ENCODE measurements at regions of chr6 and their contacts with region 1.

Region 1: GRCh38 chr6:134640975-134641429 is 308.9 kb downstream of the ALDH8A1 start:
- DNase-seq: peak; percentile 86
- ATAC-seq: peak; percentile 92
- H3K4me3 ChIP-seq: no peak overlapping the region
- H3K4me3 Mint-ChIP-seq: no peak overlapping the region
- H3K27ac ChIP-seq: no peak overlapping the region
- H3K27ac Mint-ChIP-seq: no peak overlapping the region
- H3K4me1 ChIP-seq: peaks cover 7 to 8% of the 10 kb centered on the region in 2 donors
- H3K4me1 Mint-ChIP-seq: peaks cover 10% of the 10 kb centered on the region
- H3K27me3 ChIP-seq: no peaks in the 10 kb centered on the region
- H3K27me3 Mint-ChIP-seq: no peaks in the 10 kb centered on the region
- CTCF ChIP-seq: peak; percentile 96

Region 2: GRCh38 chr6:134166511-134167261 is 474.3 kb before region 1 on chr6:
- CTCF ChIA-PET with region 1: interaction called, 35 read pairs
- POLR2A ChIA-PET with region 1: no interaction called
- intact Hi-C with region 1: no loop called
- DNase-seq: no peak
- ATAC-seq: no peak
- H3K4me3 ChIP-seq: no peak overlapping the region
- H3K4me3 Mint-ChIP-seq: no peak overlapping the region
- H3K27ac ChIP-seq: no peak overlapping the region
- H3K27ac Mint-ChIP-seq: no peak overlapping the region
- H3K4me1 ChIP-seq: no peaks in the 10 kb centered on the region
- H3K4me1 Mint-ChIP-seq: peaks cover 5% of the 10 kb centered on the region
- H3K27me3 ChIP-seq: no peaks in the 10 kb centered on the region
- H3K27me3 Mint-ChIP-seq: no peaks in the 10 kb centered on the region
- CTCF ChIP-seq: no peak

Region 3: DNA sequence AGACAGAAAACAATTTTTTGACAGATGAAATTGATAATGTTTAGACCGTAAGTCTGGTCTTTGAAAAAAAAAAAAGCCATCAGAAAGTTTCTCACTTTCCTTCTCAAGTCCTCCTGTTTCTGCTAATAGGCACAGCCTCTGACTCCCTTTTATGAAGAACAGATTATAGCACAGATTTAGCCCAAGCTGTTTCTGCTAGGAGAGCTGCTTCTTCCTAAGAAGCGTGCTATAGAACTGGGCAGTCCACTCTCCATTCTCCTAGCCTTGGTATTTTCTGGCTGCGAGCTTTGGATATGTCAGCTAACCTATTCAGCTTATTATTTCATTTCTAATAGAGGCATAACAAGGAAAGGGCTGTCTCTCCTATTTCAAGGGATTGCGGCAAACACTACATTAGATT is 435.6 kb before region 1 on chr6:
- CTCF ChIA-PET with region 1: interaction called, 4 read pairs
- POLR2A ChIA-PET with region 1: interaction called, 10 read pairs
- intact Hi-C with region 1: no loop called
- DNase-seq: no peak
- ATAC-seq: no peak
- H3K4me3 ChIP-seq: no peak overlapping the region
- H3K4me3 Mint-ChIP-seq: no peak overlapping the region
- H3K27ac ChIP-seq: no peak overlapping the region
- H3K27ac Mint-ChIP-seq: no peak overlapping the region
- H3K4me1 ChIP-seq: peaks cover 0 to 3% of the 10 kb centered on the region in 2 donors
- H3K4me1 Mint-ChIP-seq: peaks cover 7% of the 10 kb centered on the region
- H3K27me3 ChIP-seq: no peaks in the 10 kb centered on the region
- H3K27me3 Mint-ChIP-seq: no peaks in the 10 kb centered on the region
- CTCF ChIP-seq: no peak

Region 4: DNA sequence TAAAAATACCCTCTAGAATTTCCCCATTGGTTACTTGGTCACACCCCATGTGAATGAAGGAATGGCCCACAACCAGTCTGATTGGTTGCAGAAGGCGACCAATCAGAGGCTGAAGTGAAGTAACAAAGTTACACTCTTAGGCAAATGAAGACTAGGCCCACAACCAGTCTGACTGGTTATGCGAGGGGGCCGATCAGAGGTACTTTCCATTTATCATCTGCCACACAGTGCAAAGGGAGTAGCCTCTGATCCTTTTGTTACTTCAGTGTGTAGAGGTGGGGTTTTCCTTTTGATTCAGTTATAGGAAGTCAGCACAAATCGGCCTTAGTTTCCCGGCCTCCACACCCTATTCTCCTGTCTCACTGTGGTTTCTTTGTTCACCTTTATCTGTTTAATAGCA is 261.9 kb before region 1 on chr6:
- CTCF ChIA-PET with region 1: interaction called, 5 read pairs
- POLR2A ChIA-PET with region 1: no interaction called
- intact Hi-C with region 1: loop called (anchors 5 kb)
- DNase-seq: peak; percentile 49
- ATAC-seq: peak; percentile 76
- H3K4me3 ChIP-seq: no peak overlapping the region
- H3K4me3 Mint-ChIP-seq: peak overlapping the region; percentile 9
- H3K27ac ChIP-seq: peak overlapping the region in 1 of 2 donors; percentile 61
- H3K27ac Mint-ChIP-seq: peak overlapping the region; percentile 16
- H3K4me1 ChIP-seq: no peaks in the 10 kb centered on the region
- H3K4me1 Mint-ChIP-seq: peaks cover 20% of the 10 kb centered on the region
- H3K27me3 ChIP-seq: no peaks in the 10 kb centered on the region
- H3K27me3 Mint-ChIP-seq: no peaks in the 10 kb centered on the region
- CTCF ChIP-seq: no peak

Region 5: DNA sequence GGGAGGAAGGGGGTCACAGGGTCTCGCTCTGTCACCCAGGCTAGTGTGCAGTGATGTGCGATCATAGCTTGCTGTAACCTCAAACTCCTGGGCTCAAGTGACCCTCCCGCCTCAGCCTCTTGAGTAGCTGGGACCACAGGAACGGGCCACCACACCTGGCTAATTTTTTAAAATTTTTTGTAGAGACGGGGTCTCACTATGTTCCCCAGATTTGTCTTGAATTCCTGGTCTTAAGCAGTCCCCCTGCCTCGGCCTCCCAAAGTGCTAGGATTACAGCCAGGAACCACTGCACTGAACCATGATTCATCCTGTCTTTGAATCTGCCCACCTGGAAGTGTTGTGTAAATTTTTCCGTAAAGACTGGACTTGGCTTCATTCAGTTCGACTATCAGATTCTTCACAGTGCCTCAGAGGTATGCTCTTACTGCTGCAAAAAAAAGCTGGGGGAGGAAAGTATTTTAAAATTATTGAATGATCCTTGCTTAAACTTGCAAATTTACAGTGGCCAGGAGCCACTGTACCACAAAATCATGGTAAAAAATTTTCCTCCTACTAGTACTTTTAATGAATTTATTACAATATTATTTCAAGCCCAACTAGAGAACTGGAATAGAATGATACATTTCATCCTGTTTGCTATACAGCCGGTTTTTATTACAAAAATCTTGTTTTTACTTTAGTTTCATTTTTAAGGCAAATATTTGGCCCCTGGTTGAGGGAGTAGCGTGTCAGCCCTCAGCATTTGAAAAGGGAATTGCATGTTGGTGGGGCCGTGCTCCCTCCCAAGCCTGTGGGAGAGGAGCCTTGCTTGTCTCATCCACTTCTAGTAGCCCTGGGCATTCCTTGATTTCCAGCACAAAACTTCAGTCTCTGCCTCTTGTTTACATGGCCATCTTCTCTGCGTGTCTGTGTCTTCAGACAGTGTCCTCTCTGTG is 120.6 kb before region 1 on chr6:
- CTCF ChIA-PET with region 1: no interaction called
- POLR2A ChIA-PET with region 1: no interaction called
- intact Hi-C with region 1: loop called (anchors 5 kb)
- DNase-seq: no peak
- ATAC-seq: no peak
- H3K4me3 ChIP-seq: no peak overlapping the region
- H3K4me3 Mint-ChIP-seq: no peak overlapping the region
- H3K27ac ChIP-seq: no peak overlapping the region
- H3K27ac Mint-ChIP-seq: no peak overlapping the region
- H3K4me1 ChIP-seq: peaks cover 8 to 15% of the 10 kb centered on the region in 2 donors
- H3K4me1 Mint-ChIP-seq: peaks cover 12% of the 10 kb centered on the region
- H3K27me3 ChIP-seq: no peaks in the 10 kb centered on the region
- H3K27me3 Mint-ChIP-seq: no peaks in the 10 kb centered on the region
- CTCF ChIP-seq: no peak

Region 6: DNA sequence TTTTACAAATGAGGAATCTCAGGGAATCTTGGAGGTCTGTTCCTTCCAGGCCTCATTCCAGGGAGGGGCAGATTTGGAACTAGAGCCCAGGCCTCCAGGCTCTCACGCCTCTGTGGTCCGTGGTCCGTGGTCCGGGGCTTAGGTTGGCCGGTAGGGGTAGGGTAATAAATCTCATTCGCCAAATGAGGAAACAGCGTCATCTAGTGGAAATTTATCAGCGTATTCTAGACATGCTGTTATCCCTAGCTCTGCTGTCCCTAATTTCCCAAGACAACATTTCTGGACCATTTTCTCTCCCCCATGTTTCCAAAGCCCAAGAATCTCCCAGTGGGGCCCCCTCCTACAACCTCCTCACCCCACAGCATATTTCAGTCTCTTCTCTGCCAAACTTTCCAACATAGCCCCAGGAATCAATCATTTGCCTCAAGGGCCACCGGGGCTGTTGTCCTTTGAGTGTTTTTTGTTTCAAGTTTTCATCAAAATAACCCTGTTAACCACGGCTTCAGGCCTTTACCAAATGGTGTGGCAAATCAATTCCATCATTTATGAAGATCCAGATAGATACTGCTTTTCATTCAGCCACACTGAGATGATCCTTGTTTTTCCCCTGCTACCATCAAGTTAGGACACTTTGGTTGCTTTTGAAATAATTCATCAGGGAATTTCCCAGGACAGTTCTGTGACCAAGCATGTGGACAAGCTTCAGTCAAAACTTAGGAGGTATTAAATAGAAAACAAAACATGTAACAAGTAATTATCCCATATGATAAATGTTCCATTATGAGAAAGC is 182.1 kb after region 1 on chr6:
- CTCF ChIA-PET with region 1: interaction called, 53 read pairs
- POLR2A ChIA-PET with region 1: no interaction called
- intact Hi-C with region 1: loop called (anchors 1 kb)
- DNase-seq: peak; percentile 72
- ATAC-seq: peak; percentile 74
- H3K4me3 ChIP-seq: no peak overlapping the region
- H3K4me3 Mint-ChIP-seq: no peak overlapping the region
- H3K27ac ChIP-seq: no peak overlapping the region
- H3K27ac Mint-ChIP-seq: no peak overlapping the region
- H3K4me1 ChIP-seq: no peaks in the 10 kb centered on the region
- H3K4me1 Mint-ChIP-seq: peaks cover 9% of the 10 kb centered on the region
- H3K27me3 ChIP-seq: no peaks in the 10 kb centered on the region
- H3K27me3 Mint-ChIP-seq: peaks cover 3% of the 10 kb centered on the region
- CTCF ChIP-seq: peak; percentile 77

Measured in B cell (primary cell).